ENCODE measurements at regions of chr15 and their contacts with region 1.

Region 1: DNA sequence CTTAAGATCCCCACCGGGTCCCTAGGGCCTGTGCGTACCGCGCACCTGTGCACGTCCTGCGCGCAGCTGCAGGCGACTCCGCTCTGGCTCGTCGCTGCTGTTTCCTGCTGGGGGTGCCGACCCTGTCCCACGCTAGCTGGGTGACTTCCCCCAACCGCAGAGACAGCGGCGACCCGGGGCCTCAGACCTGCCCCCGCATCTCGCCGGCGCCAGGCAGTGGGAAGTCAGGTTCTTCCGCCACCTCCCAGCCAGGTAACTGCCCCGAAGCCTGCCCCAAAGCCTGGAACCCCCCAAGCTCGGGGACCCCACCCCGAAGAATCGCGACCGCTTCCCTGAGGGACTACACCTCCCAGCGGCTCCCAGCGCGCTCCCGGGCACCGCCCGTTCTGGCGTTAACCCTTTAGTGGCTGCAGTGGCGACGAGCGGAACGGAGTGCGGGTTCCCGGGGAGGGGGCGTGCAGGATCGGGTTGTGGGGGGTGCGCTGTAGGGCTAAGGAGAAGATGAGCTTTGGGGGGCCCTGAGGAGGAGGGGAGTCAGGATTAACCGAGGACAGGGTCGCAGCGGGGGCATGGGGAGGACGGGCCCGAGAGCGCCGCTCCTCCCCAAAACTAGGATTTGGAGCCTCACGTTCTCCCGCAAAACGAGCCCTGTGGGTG is 511 bp downstream of the NEIL1 start:
- DNase-seq: peak in 1 of 2 experiments; percentile 58
- H3K4me3 ChIP-seq: peak overlapping the region; percentile 84
- H3K27ac ChIP-seq: no peak overlapping the region
- H3K4me1 ChIP-seq: no peaks in the 10 kb centered on the region
- H3K27me3 ChIP-seq: no peaks in the 10 kb centered on the region
- CTCF ChIP-seq: no peak

Region 2: DNA sequence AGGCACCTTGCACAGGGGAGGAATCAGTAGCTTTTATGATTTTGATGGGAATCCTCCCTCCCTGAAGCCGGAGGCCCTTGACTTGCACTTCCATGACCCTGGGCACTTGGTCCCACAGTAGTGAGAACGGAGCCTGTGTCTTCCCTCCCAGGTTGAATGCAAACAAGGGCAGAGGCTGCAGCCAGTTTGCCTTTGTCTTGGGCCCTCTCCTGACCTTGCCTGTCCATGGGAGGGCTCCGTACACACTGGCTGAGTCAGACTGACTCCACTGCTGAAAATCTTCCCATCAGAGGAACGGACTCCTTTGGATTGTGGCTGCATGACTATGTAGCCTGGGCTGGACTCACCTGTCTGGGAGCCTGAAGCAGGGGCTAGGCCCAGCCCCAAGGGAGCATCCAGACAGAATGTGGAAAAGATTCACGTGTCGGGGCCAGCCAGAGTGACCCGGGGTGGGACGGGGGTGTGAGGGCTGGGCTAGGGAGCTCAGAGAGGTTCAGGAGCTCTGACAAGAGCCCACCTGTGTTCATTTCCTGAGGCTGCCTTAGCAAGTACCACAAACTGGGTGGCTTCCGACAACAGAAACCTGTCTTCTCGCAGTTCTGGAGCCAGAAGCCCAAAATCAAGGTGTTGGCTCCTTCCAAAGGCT is 1464.5 kb before region 1 on chr15:
- CTCF ChIA-PET with region 1: no interaction called
- POLR2A ChIA-PET with region 1: interaction called, 10 read pairs
- intact Hi-C with region 1: no loop called
- DNase-seq: no peak
- H3K4me3 ChIP-seq: no peak overlapping the region
- H3K27ac ChIP-seq: no peak overlapping the region
- H3K4me1 ChIP-seq: no peaks in the 10 kb centered on the region
- H3K27me3 ChIP-seq: peaks cover 43% of the 10 kb centered on the region
- CTCF ChIP-seq: no peak

Region 3: GRCh38 chr15:74635228-74635627 is 712.1 kb before region 1 on chr15:
- CTCF ChIA-PET with region 1: no interaction called
- POLR2A ChIA-PET with region 1: no interaction called
- intact Hi-C with region 1: no loop called
- DNase-seq: peak in 1 of 2 experiments; percentile 58
- H3K4me3 ChIP-seq: no peak overlapping the region
- H3K27ac ChIP-seq: no peak overlapping the region
- H3K4me1 ChIP-seq: no peaks in the 10 kb centered on the region
- H3K27me3 ChIP-seq: no peaks in the 10 kb centered on the region
- CTCF ChIP-seq: peak; percentile 94

Region 4: GRCh38 chr15:75493732-75494131 is 146.4 kb after region 1 on chr15:
- CTCF ChIA-PET with region 1: interaction called, 10 read pairs
- POLR2A ChIA-PET with region 1: no interaction called
- intact Hi-C with region 1: no loop called
- DNase-seq: no peak
- H3K4me3 ChIP-seq: no peak overlapping the region
- H3K27ac ChIP-seq: no peak overlapping the region
- H3K4me1 ChIP-seq: no peaks in the 10 kb centered on the region
- H3K27me3 ChIP-seq: no peaks in the 10 kb centered on the region
- CTCF ChIP-seq: no peak

Measured in PC-9 (cell line).